ENCODE measurements at regions of chr16 and their contacts with region 1.

Region 1: GRCh38 chr16:77971306-77972271 is 50.8 kb upstream of the CLEC3A start:
- DNase-seq: peak; percentile 78 to 80
- H3K4me3 ChIP-seq: no peak overlapping the region
- H3K4me3 Mint-ChIP-seq: no peak overlapping the region
- H3K27ac Mint-ChIP-seq: no peak overlapping the region
- H3K4me1 ChIP-seq: no peaks in the 10 kb centered on the region; the same call in 1 of the 2 replicates
- H3K4me1 Mint-ChIP-seq: no peaks in the 10 kb centered on the region
- H3K27me3 ChIP-seq: no peaks in the 10 kb centered on the region
- H3K27me3 Mint-ChIP-seq: peaks cover 8% of the 10 kb centered on the region
- CTCF ChIP-seq: peak; percentile 84 to 95

Region 2: DNA sequence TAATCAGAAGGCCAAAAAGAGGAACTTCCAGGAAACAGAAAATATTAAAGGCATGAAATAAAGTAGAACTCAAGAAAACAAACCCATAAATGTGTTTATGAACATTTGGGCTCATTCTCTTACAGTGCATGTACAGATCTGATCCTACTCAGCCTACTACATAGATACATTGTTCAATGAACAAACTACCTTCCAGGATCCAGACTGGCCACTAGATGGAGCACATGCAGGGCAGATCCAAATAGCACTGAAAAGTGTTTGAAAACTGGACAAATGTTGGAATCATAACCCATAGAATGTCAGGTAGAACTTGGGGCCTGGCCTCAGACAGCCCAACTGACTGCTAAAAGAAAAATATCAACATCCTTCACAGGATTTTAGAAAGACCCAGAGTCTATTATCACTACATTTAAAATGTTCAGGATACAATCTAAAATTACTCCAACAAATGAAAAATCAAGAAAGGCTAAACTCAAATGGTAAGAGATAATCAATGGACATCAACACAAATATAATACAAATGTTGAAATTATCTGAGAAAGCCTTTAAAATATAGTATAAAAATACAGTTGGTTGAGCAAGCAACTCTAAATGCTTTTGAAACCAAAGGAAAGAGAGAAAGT is 371.7 kb before region 1 on chr16:
- CTCF ChIA-PET with region 1: no interaction called
- POLR2A ChIA-PET with region 1: no interaction called
- intact Hi-C with region 1: loop called (anchors 1 kb)
- DNase-seq: peak; percentile 50 to 58
- H3K4me3 ChIP-seq: no peak overlapping the region
- H3K4me3 Mint-ChIP-seq: no peak overlapping the region
- H3K27ac Mint-ChIP-seq: no peak overlapping the region
- H3K4me1 ChIP-seq: no peaks in the 10 kb centered on the region
- H3K4me1 Mint-ChIP-seq: no peaks in the 10 kb centered on the region
- H3K27me3 ChIP-seq: no peaks in the 10 kb centered on the region
- H3K27me3 Mint-ChIP-seq: peaks cover 30% of the 10 kb centered on the region
- CTCF ChIP-seq: peak; percentile 82 to 97

Region 3: DNA sequence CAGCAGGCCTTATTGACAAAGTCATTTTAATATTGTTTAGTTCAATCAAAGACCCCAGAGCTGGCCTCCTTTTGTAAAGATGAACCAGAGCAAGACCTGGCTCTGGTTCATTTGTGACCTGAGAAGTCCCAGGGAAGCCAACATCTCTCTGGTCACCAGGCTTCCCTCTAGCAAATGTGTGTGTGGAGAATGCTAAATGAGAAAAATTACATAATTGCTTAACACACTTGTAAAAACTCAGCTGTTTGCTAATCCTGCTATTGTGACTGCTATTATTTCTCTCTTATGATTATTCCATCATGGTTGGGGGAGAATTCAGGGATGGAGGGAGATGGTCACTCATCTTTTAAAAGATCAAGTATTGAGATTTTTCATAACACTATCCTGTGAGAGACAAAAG is 43.5 kb before region 1 on chr16:
- CTCF ChIA-PET with region 1: no interaction called
- POLR2A ChIA-PET with region 1: no interaction called
- intact Hi-C with region 1: no loop called
- DNase-seq: no peak
- H3K4me3 ChIP-seq: no peak overlapping the region
- H3K4me3 Mint-ChIP-seq: no peak overlapping the region
- H3K27ac Mint-ChIP-seq: no peak overlapping the region
- H3K4me1 ChIP-seq: no peaks in the 10 kb centered on the region
- H3K4me1 Mint-ChIP-seq: no peaks in the 10 kb centered on the region
- H3K27me3 ChIP-seq: peaks cover 1% of the 10 kb centered on the region; the same call in 1 of the 2 replicates
- H3K27me3 Mint-ChIP-seq: peaks cover 12% of the 10 kb centered on the region
- CTCF ChIP-seq: no peak

Region 4: DNA sequence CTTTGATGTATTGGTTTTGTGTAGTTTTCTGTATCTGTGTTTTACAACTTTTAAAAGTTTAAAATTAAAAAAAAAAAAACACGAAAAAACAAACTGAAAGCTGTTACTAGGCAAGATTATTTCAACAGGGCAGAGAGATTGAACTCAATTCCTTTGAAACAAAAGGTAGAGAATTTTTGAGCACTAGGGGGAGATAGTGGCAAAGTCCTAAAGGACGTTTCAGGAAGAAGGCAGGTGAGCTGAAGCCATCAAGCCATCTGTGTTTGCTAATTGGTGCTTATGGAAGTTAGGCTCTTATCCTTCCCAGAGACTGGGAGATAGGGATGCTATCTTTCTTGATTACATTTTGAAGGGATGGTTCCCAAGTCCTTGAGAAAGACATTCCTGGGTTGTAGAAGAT is 19.8 kb before region 1 on chr16:
- CTCF ChIA-PET with region 1: interaction called, 3 read pairs
- POLR2A ChIA-PET with region 1: no interaction called
- intact Hi-C with region 1: loop called (anchors 1 kb)
- DNase-seq: peak in 1 of 2 experiments; percentile 65
- H3K4me3 ChIP-seq: no peak overlapping the region
- H3K4me3 Mint-ChIP-seq: no peak overlapping the region
- H3K27ac Mint-ChIP-seq: no peak overlapping the region
- H3K4me1 ChIP-seq: no peaks in the 10 kb centered on the region
- H3K4me1 Mint-ChIP-seq: no peaks in the 10 kb centered on the region
- H3K27me3 ChIP-seq: no peaks in the 10 kb centered on the region
- H3K27me3 Mint-ChIP-seq: peaks cover 20% of the 10 kb centered on the region
- CTCF ChIP-seq: peak; percentile 47 to 74